Activated CD4-positive, alpha-beta memory T cell treated with anti-CD3 and anti-CD28 coated beads for 36 hours (primary cell): ENCODE measurements at regions of chr15 and their contacts with region 1.

Region 1: DNA sequence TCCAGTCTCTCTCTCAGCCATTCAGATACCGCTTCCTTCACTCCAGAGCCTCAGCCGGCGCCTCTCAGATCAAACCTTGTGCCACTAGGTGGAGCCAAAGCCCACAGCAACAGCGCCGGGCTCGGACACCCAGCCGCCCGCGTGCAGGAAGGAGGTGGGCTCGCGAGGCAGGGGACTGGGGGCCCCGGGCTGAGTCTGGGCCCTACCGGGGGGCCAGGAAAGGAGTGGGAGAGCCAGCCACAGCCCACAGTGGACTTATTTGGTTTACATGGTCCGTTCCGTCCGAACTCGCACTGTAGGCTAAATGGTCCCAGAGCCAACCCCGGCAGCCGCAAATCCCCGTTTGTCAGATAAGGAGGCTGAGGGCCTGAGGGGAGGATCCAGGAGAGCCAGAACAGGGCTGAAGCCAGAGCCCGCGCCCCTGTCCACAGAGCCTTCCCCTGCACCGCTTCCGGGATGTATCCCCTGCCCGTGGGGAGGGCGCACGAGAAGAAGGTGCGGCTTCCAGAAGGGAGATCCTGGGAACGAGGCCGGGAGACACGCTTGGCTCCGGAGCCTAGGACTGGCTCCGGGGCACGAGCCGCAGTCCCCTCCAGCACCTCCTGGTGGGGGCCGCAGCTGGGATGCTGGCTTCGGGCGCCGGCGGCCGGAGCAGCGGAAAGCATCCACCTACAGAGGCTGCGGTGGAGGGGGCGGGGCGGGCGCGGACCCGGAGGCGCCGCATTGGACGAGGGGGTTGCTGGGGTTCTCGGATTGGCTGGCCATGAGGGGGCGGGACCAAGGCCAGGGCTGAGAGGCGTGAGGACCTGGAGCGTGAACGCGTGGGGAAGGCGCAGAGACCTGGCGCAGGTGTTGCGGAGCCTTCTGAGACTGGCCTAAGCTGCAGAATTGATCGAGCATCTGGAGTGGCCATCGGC is 6.5 kb upstream of the CYP11A1 start:
- DNase-seq: peak; percentile 97
- H3K4me3 Mint-ChIP-seq: peak overlapping the region; percentile 71
- H3K27ac Mint-ChIP-seq: peak overlapping the region; percentile 35
- H3K4me1 Mint-ChIP-seq: peaks cover 24% of the 10 kb centered on the region
- H3K27me3 Mint-ChIP-seq: peaks cover 3% of the 10 kb centered on the region

Region 2: GRCh38 chr15:74402873-74403587 is 29.0 kb after region 1 on chr15:
- CTCF ChIA-PET with region 1: interaction called, 14 read pairs
- POLR2A ChIA-PET with region 1: interaction called, 5 read pairs
- intact Hi-C with region 1: no loop called
- DNase-seq: peak; percentile 95
- H3K4me3 Mint-ChIP-seq: peak overlapping the region; percentile 28
- H3K27ac Mint-ChIP-seq: peak overlapping the region; percentile 85
- H3K4me1 Mint-ChIP-seq: peaks cover 73% of the 10 kb centered on the region
- H3K27me3 Mint-ChIP-seq: no peaks in the 10 kb centered on the region

Region 3: DNA sequence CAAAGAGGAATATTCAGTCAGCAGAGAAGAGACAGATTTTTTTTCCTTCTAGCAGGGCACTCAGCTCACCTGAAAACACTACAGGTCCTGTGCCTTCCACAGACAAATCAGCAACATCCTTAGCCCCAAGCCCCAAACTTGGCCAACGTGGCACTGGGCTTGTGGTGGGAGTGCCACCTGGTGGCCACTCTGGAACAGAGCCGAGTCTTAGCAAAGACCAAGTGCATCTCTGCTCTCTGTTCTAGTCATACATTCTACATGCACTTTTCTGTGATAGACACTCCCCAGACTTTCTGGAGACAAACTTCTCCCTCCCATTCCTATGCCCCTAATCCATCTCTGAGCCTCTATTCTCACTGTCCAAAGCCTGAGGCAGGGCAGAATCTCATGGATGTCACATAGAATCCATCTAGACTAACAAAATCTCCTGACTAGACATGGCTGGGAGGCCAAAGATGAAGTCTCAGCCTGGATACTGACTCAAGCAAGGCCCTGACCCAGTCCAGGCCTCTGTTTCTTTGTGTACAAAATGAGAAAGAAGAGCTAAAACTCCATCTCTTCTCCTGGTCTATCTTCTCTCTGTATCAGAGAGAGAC is 64.8 kb after region 1 on chr15:
- CTCF ChIA-PET with region 1: interaction called, 652 read pairs
- POLR2A ChIA-PET with region 1: interaction called, 9 read pairs
- intact Hi-C with region 1: loop called (anchors 1 kb)
- DNase-seq: peak; percentile 87
- H3K4me3 Mint-ChIP-seq: no peak overlapping the region
- H3K27ac Mint-ChIP-seq: no peak overlapping the region
- H3K4me1 Mint-ChIP-seq: peaks cover 28% of the 10 kb centered on the region
- H3K27me3 Mint-ChIP-seq: no peaks in the 10 kb centered on the region

Region 4: GRCh38 chr15:74545880-74546656 is 172.1 kb after region 1 on chr15:
- CTCF ChIA-PET with region 1: interaction called, 7 read pairs
- POLR2A ChIA-PET with region 1: interaction called, 3 read pairs
- intact Hi-C with region 1: loop called (anchors 1 kb)
- DNase-seq: peak; percentile 99
- H3K4me3 Mint-ChIP-seq: peak overlapping the region; percentile 49
- H3K27ac Mint-ChIP-seq: peak overlapping the region; percentile 62
- H3K4me1 Mint-ChIP-seq: peaks cover 74% of the 10 kb centered on the region
- H3K27me3 Mint-ChIP-seq: no peaks in the 10 kb centered on the region

Region 5: DNA sequence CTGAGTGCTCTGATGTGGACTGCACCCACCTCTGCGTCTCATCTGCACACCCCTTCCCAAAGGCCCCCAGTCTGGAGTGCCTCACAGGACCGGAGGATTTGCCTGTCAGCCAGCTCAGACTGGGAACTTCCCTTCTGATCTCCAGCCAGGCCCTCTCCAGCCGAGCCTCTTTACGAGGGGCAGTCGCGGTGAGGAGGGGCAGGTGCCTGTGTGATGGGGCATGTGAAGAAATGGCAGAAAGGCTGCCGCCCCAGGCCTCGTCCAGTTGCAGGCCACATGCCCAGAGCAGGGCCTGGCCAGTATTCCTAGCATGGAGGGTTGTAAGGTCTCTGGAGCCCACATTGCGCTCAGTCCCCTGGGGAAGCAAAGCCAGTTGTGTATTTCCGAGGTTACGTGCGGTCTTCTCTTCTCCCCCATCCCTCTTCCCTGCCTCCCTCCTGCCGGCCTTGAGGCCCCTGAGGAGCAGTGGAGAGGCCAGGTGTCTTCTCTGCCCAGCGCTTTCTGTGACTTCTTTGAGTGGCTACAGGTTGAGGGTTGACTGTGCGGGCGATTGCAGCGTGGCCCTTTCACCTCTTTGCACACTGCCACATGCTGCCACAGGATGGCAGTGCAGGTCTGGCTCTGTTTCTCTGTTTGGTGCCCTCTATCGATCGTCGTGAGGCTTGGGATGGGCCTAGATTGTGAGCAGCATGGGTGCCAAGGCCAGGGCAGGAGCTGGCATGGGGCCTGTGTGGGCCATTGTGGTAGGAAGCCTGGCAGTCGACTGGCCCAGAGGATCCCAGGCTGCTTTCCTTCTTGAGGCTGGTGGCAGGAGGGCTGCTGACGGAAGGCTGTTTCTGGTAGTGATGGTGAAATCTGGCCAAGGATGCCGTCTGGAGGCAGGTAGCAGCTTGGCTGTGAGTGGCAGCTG is 246.9 kb after region 1 on chr15:
- CTCF ChIA-PET with region 1: interaction called, 12 read pairs
- POLR2A ChIA-PET with region 1: no interaction called
- intact Hi-C with region 1: loop called (anchors 2 kb)
- DNase-seq: peak; percentile 87
- H3K4me3 Mint-ChIP-seq: no peak overlapping the region
- H3K27ac Mint-ChIP-seq: peak overlapping the region; percentile 67
- H3K4me1 Mint-ChIP-seq: peaks cover 44% of the 10 kb centered on the region
- H3K27me3 Mint-ChIP-seq: no peaks in the 10 kb centered on the region